ENCODE measurements at regions of chr12 and their contacts with region 1.

Region 1: DNA sequence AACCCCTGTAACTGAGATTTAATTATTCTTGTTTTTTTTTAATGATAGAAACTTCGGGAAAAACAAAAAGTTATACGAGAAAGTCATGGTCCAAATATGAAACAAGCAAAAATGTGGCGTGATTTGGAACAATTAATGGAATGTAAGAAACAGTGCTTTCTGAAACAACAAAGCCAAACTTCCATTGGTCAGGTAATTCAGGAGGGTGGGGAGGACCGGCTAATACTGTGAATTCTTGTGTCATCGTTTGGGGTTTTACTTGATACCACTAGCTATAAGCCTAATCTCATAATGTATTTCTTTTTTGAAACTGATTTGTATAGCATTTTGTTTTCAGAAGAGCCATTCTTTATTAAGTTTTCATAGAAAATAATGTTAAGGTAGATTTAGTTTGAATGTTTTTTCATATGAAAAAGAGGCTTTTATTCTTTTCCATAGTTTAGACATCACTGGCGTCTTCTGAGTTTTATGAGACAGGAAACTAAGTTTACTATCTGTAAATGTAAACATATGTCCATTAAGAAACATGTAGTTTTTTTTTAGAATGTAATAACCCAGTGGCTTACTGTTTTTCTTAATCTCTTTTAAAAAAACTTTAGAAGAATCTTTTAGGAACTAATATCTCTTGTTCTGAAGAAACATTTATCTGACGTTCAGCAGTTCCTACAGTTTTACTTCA is 62.9 kb upstream of the ATP2A2 start:
- DNase-seq: no peak
- ATAC-seq: no peak
- H3K4me3 ChIP-seq: no peak overlapping the region
- H3K27ac ChIP-seq: no peak overlapping the region
- H3K4me1 ChIP-seq: no peaks in the 10 kb centered on the region
- H3K27me3 ChIP-seq: no peaks in the 10 kb centered on the region
- CTCF ChIP-seq: no peak

Region 2: GRCh38 chr12:110289044-110289710 is 71.0 kb after region 1 on chr12:
- CTCF ChIA-PET with region 1: no interaction called
- POLR2A ChIA-PET with region 1: interaction called, 11 read pairs
- in situ Hi-C with region 1: no loop called
- intact Hi-C with region 1: no loop called
- DNase-seq: no peak
- ATAC-seq: 0 out of 2 replicates have a peak, but pooled peaks have one; percentile 22
- H3K4me3 ChIP-seq: no peak overlapping the region
- H3K27ac ChIP-seq: peak overlapping the region; percentile 17; the same call in 1 of the 2 replicates
- H3K4me1 ChIP-seq: peaks cover 28% of the 10 kb centered on the region
- H3K27me3 ChIP-seq: no peaks in the 10 kb centered on the region
- CTCF ChIP-seq: no peak

Region 3: GRCh38 chr12:110657747-110658146 is 439.6 kb after region 1 on chr12:
- CTCF ChIA-PET with region 1: no interaction called
- POLR2A ChIA-PET with region 1: no interaction called
- in situ Hi-C with region 1: no loop called
- intact Hi-C with region 1: no loop called
- DNase-seq: no peak
- ATAC-seq: no peak
- H3K4me3 ChIP-seq: no peak overlapping the region
- H3K27ac ChIP-seq: no peak overlapping the region
- H3K4me1 ChIP-seq: no peaks in the 10 kb centered on the region
- H3K27me3 ChIP-seq: no peaks in the 10 kb centered on the region
- CTCF ChIP-seq: no peak